ENCODE measurements at regions of chrX and their contacts with region 1.

Region 1: DNA sequence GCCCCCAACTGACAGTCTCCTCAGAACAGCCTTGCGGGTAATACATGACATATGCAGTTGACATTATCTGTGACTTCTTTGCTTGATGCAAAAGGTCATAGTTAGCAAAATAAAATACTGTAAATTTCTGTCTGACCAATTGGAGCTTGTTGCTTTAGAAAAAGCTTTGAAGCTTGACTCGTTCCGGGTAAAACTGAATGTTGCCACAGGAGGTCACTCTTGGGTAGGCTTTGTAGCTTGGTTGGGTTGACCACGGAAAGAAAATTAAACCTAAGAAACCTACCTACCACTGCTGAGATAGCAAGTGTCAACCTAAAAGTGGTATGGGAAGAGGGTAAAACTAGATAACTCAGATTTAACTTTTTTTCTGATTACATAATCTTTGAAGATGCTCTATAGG is 23.2 kb downstream of the PRPS2 start:
- DNase-seq: peak; percentile 57
- CTCF ChIP-seq: peak; percentile 26

Region 2: DNA sequence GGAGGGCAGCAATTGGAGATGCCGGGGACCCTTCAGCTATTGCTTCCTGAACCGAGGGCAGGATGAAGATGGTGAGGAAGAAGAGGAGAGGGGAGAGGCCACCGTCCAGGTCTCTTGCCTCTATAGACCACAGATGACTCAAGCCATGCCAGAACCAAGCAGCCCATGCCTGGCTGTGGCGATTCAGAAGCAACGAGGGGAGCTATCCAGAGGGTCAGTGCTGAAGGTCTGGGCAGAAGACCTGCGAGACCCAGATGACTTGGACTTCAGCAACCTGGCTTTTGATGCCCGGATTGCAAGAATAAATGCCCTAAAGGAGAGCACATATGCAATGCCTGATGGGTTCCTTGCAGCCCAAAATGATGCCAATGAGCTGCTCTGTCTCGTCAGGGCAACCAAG is 93.4 kb before region 1 on chrX:
- CTCF ChIA-PET with region 1: no interaction called
- POLR2A ChIA-PET with region 1: no interaction called
- DNase-seq: no peak
- CTCF ChIP-seq: no peak

Region 3: GRCh38 chrX:12791257-12792228 is 22.9 kb before region 1 on chrX and contains the start of gene PRPS2:
- CTCF ChIA-PET with region 1: interaction called, 11 read pairs
- POLR2A ChIA-PET with region 1: no interaction called
- DNase-seq: peak; percentile 81
- CTCF ChIP-seq: no peak

Region 4: DNA sequence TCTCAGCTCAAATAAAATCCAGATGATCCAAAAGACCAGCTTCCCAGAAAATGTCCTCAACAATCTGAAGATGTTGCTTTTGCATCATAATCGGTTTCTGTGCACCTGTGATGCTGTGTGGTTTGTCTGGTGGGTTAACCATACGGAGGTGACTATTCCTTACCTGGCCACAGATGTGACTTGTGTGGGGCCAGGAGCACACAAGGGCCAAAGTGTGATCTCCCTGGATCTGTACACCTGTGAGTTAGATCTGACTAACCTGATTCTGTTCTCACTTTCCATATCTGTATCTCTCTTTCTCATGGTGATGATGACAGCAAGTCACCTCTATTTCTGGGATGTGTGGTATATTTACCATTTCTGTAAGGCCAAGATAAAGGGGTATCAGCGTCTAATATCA is 73.3 kb after region 1 on chrX:
- CTCF ChIA-PET with region 1: interaction called, 143 read pairs
- POLR2A ChIA-PET with region 1: no interaction called
- DNase-seq: no peak
- CTCF ChIP-seq: no peak

Region 5: DNA sequence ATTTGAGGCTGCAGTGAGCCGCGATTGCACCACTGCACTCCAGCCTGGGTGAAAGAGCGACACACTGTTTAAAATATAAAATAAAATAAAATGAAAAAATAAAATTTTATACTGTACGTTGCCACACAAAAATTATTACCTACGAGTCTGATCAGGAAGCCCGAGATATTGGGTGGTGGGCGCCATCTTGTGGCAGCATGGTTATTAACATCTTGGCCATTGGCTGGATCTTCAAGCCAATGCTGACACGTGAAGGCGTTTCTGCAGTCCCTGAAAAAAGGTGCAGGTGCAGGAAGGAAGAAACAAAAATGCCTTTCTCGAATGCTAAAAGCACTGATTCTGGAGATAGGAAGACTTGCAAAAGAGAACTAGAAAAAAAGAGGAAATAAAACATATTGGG is 87.1 kb after region 1 on chrX:
- CTCF ChIA-PET with region 1: interaction called, 143 read pairs
- POLR2A ChIA-PET with region 1: no interaction called
- DNase-seq: peak; percentile 70
- CTCF ChIP-seq: peak; percentile 47

Measured in GM10248 (cell line).